WTC11 (cell line): ENCODE measurements at regions of chr9 and their contacts with region 1.

Region 1: GRCh38 chr9:17116400-17116837 is 18.4 kb upstream of the CNTLN start:
- DNase-seq: no peak
- ATAC-seq: no peak
- H3K4me3 Mint-ChIP-seq: no peak overlapping the region
- H3K27ac Mint-ChIP-seq: no peak overlapping the region
- H3K4me1 Mint-ChIP-seq: peaks cover 14% of the 10 kb centered on the region
- H3K27me3 Mint-ChIP-seq: no peaks in the 10 kb centered on the region
- CTCF ChIP-seq: peak; percentile 27; the same call in 1 of the 2 replicates

Region 2: GRCh38 chr9:17082343-17083064 is 33.9 kb before region 1 on chr9:
- CTCF ChIA-PET with region 1: no interaction called
- POLR2A ChIA-PET with region 1: no interaction called
- DNase-seq: peak; percentile 60
- ATAC-seq: peak; percentile 99
- H3K4me3 Mint-ChIP-seq: no peak overlapping the region
- H3K27ac Mint-ChIP-seq: no peak overlapping the region
- H3K4me1 Mint-ChIP-seq: peaks cover 19% of the 10 kb centered on the region
- H3K27me3 Mint-ChIP-seq: no peaks in the 10 kb centered on the region
- CTCF ChIP-seq: no peak

Region 3: DNA sequence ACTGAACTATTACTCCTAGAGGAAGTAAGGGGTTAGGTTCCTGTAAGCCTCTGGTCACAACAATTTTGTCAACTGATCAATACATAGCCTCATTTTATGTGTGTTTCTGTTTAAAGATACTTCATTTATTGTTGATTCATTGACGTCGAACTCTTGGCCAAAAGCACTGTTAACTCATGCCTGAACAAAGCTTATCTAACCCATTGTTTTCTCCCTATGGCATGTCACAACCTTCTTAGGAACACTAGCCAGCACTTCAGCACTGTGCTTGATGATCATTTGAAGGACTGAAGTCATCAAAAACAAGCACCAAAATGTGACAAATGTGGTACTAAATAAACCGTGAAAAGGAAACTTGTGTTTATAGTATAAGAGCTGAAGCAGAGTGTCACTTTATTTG is 31.9 kb after region 1 on chr9:
- CTCF ChIA-PET with region 1: no interaction called
- POLR2A ChIA-PET with region 1: no interaction called
- DNase-seq: no peak
- ATAC-seq: no peak
- H3K4me3 Mint-ChIP-seq: no peak overlapping the region
- H3K27ac Mint-ChIP-seq: no peak overlapping the region
- H3K4me1 Mint-ChIP-seq: no peaks in the 10 kb centered on the region
- H3K27me3 Mint-ChIP-seq: no peaks in the 10 kb centered on the region
- CTCF ChIP-seq: no peak

Region 4: GRCh38 chr9:17402309-17402708 is 285.9 kb after region 1 on chr9:
- CTCF ChIA-PET with region 1: interaction called, 23 read pairs
- POLR2A ChIA-PET with region 1: no interaction called
- DNase-seq: no peak
- ATAC-seq: peak; percentile 85
- H3K4me3 Mint-ChIP-seq: no peak overlapping the region
- H3K27ac Mint-ChIP-seq: 0 out of 2 replicates have a peak overlapping the region, but pooled peaks have one; percentile 1
- H3K4me1 Mint-ChIP-seq: peaks cover 30% of the 10 kb centered on the region
- H3K27me3 Mint-ChIP-seq: no peaks in the 10 kb centered on the region
- CTCF ChIP-seq: no peak; the same call in 1 of the 2 replicates

Region 5: DNA sequence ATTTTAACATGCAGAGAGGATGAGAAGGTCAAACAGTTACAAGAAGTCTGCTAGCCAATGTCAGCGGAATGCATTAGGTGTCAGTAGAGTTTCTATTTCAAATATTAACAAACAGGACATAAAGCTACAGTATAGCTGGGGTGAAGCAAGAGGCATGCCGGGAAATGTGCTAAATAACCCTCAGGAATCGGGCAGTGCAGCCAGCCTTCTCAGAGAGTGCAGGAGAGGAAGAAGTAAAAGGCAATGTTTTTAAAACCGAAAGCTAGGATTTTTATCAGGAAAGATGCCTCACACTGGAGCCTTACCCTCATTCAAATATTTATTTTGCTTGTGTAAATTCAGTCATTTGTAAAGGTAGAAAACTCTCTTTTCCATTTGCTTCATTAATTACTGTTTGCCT is 403.3 kb after region 1 on chr9:
- CTCF ChIA-PET with region 1: interaction called, 12 read pairs
- POLR2A ChIA-PET with region 1: no interaction called
- DNase-seq: no peak
- ATAC-seq: no peak
- H3K4me3 Mint-ChIP-seq: no peak overlapping the region
- H3K27ac Mint-ChIP-seq: no peak overlapping the region
- H3K4me1 Mint-ChIP-seq: peaks cover 21% of the 10 kb centered on the region
- H3K27me3 Mint-ChIP-seq: no peaks in the 10 kb centered on the region
- CTCF ChIP-seq: no peak